Endothelial cell of umbilical vein (primary cell): ENCODE measurements at regions of chr14 and their contacts with region 1.

Region 1: GRCh38 chr14:50860478-50861086 is 11.3 kb upstream of the ABHD12B start:
- DNase-seq: peak; percentile 92
- H3K4me3 ChIP-seq: peak overlapping the region; percentile 49 to 72 (median 65)
- H3K27ac ChIP-seq: peak overlapping the region; percentile 78
- H3K4me1 ChIP-seq: peaks cover 10% of the 10 kb centered on the region
- H3K27me3 ChIP-seq: peaks cover 0 to 2% of the 10 kb centered on the region in 2 experiments
- CTCF ChIP-seq: peak; percentile 54 to 57
- POLR2A ChIP-seq: no peak

Region 2: DNA sequence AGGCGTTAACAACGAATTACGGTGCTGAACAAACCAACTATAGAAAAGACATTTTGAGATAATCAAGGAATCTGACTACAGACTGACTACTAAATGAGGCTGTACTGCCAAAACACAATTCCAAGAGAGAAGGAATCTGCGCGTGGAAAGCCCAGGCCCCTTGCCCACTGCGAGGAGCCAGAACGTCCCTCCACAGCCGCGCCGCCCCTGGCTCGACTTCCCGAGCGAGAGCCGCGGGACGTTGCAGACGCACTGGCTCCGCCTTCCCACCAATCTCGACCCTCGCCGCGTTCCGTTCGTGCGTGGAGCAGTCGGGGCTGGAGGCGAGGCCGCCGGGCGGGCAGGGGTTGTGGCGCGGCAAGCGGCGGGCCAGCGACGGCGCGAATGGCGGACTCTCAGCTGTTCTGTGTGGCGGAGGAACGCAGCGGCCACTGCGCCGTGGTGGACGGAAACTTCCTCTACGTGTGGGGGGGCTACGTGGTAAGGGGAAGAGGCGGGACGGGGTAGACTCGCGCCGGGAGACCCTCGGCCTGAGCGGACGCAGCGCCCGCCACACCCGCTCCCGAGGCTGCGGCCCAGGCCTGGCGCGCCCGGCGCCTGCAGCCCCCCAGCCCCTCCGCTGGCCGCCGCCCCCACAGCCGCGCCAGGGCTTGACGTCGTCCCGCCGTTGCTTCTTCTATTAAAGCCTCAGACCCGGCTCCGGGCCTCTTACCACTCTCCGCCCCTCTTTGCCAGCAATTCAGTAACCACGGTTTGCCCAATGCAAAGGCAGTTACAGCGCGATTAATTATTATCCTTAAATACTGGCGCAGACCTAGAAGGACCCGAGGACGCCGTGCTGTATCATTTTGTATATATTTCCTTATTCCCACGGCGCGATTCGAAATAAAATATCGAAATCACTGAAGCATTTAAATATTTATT is 1167.5 kb before region 1 on chr14 and contains the start of gene KLHDC1:
- CTCF ChIA-PET with region 1: no interaction called
- POLR2A ChIA-PET with region 1: no interaction called
- dilution Hi-C with region 1: no loop called
- intact Hi-C with region 1: no loop called
- DNase-seq: peak; percentile 85
- H3K4me3 ChIP-seq: peak within 1 kb of the TSS; percentile 48 to 91 (median 72)
- H3K27ac ChIP-seq: peak within 1 kb of the TSS; percentile 10
- H3K4me1 ChIP-seq: peaks cover 9% of the 10 kb centered on the region
- H3K27me3 ChIP-seq: no peaks in the 10 kb centered on the region
- CTCF ChIP-seq: no peak
- POLR2A ChIP-seq: peak; percentile 95
- total RNA-seq, gene KLHDC1: 1.2 and 1.6 TPM in 2 replicates

Region 3: DNA sequence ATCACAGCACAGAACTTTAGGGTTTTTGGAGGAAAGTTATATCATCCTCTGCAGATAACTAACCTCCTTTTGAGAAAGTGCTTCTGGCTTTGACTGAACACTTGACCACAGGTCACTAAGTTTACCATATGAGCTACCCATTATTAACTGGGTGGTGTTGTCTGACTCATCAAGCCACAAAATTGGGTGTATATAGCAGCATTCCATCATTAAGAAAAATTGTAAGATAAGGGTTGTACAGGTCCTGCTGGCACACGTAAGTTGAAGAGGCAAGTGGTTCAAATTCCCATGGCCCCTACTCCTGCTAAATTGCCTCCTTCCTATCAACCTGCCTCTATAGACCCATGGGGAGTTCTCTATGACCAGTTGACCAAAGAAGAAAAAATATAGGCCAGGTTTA is 588.1 kb before region 1 on chr14:
- CTCF ChIA-PET with region 1: no interaction called
- POLR2A ChIA-PET with region 1: no interaction called
- dilution Hi-C with region 1: no loop called
- intact Hi-C with region 1: no loop called
- DNase-seq: no peak
- H3K4me3 ChIP-seq: no peak overlapping the region
- H3K27ac ChIP-seq: no peak overlapping the region
- H3K4me1 ChIP-seq: no peaks in the 10 kb centered on the region
- H3K27me3 ChIP-seq: no peaks in the 10 kb centered on the region
- CTCF ChIP-seq: no peak
- POLR2A ChIP-seq: no peak

Region 4: DNA sequence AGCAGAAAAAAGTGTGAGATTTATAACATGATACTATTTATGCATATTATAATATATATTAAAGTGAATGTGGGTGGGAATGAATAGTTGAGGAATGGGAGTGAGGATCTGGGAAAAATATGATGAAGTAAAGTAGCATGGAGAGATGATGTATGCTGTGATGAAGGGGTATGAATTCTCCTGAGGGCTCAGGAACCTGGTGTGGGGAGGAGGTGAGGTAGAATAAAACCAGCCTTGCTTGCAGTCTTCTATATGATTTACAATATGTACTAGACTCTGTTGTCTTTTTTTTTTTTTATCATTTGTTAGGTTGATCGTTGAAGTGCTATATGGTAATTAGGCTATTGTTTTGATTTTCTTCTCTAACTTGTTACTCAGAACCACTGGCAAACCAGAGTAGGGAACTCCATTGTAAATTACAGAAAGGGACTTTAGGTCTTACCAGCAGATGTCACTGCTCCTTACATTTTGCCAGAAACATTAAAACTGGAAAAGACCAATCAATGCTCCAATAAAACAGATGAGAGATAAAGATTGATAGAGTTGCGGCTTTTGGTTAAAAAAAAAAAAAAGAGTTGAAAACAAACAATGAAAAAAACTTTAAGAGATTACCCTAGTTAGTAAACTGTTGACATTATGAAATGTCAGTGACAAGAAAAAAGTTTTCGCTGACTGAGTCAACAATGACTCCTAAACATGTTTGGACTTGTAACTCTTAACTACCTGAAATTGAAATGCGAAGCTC is 260.7 kb before region 1 on chr14:
- CTCF ChIA-PET with region 1: interaction called, 23 read pairs
- POLR2A ChIA-PET with region 1: no interaction called
- dilution Hi-C with region 1: no loop called
- intact Hi-C with region 1: loop called (anchors 2 kb)
- DNase-seq: peak; percentile 68
- H3K4me3 ChIP-seq: no peak overlapping the region
- H3K27ac ChIP-seq: no peak overlapping the region
- H3K4me1 ChIP-seq: peaks cover 3% of the 10 kb centered on the region
- H3K27me3 ChIP-seq: no peaks in the 10 kb centered on the region
- CTCF ChIP-seq: peak; percentile 35 to 46
- POLR2A ChIP-seq: no peak

Region 5: DNA sequence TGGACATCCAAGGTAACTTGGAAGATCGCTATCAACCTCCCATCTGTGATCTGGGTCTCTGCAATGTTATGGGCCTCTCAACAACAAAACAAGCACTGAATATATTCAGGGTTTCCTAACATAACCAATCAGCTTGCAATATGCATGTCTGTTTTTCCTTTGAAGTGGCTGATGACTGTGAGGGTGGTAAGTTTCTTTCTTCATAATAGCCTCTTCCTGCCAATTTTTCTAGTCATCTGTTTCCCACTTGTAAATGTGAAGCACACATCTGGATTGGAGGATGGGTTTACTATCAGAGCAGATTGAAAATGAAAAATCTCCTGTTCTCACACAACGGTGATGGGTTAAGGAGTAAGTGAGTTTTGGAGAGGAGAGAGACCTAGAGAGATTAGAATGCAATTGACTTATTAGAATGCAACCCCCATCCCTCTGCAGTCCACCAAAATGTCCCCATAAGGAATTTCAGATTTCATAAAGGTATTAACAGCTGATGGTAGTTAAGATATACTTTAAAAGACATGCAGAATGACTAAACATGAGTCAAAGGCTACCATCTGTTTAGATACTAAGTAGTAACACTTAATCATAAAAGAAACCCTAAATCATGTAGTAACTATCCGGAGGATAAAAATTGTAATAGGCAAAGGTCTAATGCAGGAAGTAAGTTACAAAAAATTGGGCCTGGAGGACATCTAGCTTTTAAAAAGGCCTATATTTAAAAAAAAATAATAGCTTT is 134.0 kb before region 1 on chr14:
- CTCF ChIA-PET with region 1: interaction called, 20 read pairs
- POLR2A ChIA-PET with region 1: no interaction called
- dilution Hi-C with region 1: no loop called
- intact Hi-C with region 1: no loop called
- DNase-seq: no peak
- H3K4me3 ChIP-seq: no peak overlapping the region
- H3K27ac ChIP-seq: no peak overlapping the region
- H3K4me1 ChIP-seq: no peaks in the 10 kb centered on the region
- H3K27me3 ChIP-seq: no peaks in the 10 kb centered on the region
- CTCF ChIP-seq: no peak
- POLR2A ChIP-seq: no peak

Region 6: DNA sequence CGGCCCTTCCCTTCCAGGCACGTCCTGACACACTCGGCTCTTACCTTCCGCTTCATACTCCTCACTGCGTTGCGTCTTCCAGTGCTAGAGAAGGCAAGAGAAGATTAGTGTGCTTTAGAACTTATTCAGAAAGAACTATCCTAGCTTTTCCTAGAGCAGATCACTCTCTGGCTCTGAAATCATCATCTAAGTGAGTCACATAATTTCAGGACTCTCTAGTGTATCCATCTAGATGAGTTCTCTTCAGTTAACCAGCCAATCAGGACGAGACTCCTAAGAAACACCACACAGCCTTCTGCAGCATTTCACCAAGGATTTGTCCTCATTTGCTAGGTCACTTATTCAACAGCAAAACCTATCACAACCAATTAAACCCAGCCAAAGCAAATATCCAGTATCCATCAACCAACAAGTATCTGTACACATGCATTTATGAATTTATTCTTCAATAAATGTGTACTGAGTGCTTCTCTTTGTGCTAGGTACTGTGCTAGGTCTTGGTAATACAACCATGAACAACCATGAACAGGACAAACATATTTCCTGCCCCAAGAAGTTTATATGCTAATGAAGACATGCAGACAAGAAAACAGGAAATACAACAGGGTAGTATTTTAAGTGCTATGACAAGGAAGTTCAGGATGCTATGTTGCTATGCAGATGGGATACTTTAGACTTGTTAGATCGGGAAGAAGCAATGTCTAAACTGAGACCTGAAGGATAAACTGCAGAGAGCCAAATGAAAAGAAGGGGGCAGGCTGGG is 81.7 kb before region 1 on chr14:
- CTCF ChIA-PET with region 1: interaction called, 140 read pairs
- POLR2A ChIA-PET with region 1: interaction called, 3 read pairs
- dilution Hi-C with region 1: no loop called
- intact Hi-C with region 1: loop called (anchors 1 kb)
- DNase-seq: no peak
- H3K4me3 ChIP-seq: no peak overlapping the region
- H3K27ac ChIP-seq: no peak overlapping the region
- H3K4me1 ChIP-seq: peaks cover 32% of the 10 kb centered on the region
- H3K27me3 ChIP-seq: no peaks in the 10 kb centered on the region
- CTCF ChIP-seq: no peak
- POLR2A ChIP-seq: no peak

Region 7: GRCh38 chr14:50816395-50817047 is 44.1 kb before region 1 on chr14:
- CTCF ChIA-PET with region 1: interaction called, 11 read pairs
- POLR2A ChIA-PET with region 1: no interaction called
- dilution Hi-C with region 1: no loop called
- intact Hi-C with region 1: no loop called
- DNase-seq: peak; percentile 73
- H3K4me3 ChIP-seq: no peak overlapping the region
- H3K27ac ChIP-seq: peak overlapping the region; percentile 67
- H3K4me1 ChIP-seq: peaks cover 11% of the 10 kb centered on the region
- H3K27me3 ChIP-seq: no peaks in the 10 kb centered on the region
- CTCF ChIP-seq: no peak
- POLR2A ChIP-seq: no peak

Region 8: GRCh38 chr14:50875359-50876070 is 14.9 kb after region 1 on chr14:
- CTCF ChIA-PET with region 1: interaction called, 15 read pairs
- POLR2A ChIA-PET with region 1: no interaction called
- dilution Hi-C with region 1: no loop called
- intact Hi-C with region 1: no loop called
- DNase-seq: no peak
- H3K4me3 ChIP-seq: no peak overlapping the region
- H3K27ac ChIP-seq: no peak overlapping the region
- H3K4me1 ChIP-seq: no peaks in the 10 kb centered on the region
- H3K27me3 ChIP-seq: peaks cover 55 to 81% of the 10 kb centered on the region in 2 experiments
- CTCF ChIP-seq: no peak
- POLR2A ChIP-seq: no peak

Region 9: GRCh38 chr14:50917449-50917848 is 56.9 kb after region 1 on chr14:
- CTCF ChIA-PET with region 1: no interaction called
- POLR2A ChIA-PET with region 1: no interaction called
- dilution Hi-C with region 1: no loop called
- intact Hi-C with region 1: no loop called
- DNase-seq: no peak
- H3K4me3 ChIP-seq: no peak overlapping the region
- H3K27ac ChIP-seq: no peak overlapping the region
- H3K4me1 ChIP-seq: no peaks in the 10 kb centered on the region
- H3K27me3 ChIP-seq: no peaks in the 10 kb centered on the region
- CTCF ChIP-seq: no peak
- POLR2A ChIP-seq: no peak